ENCODE measurements at regions of chr1 and their contacts with region 1.

Region 1: GRCh38 chr1:28668191-28668955 is at the start of gene GMEB1:
- DNase-seq: peak; percentile 77
- ATAC-seq: peak; percentile 81
- H3K4me3 ChIP-seq: peak within 1 kb of the TSS; percentile 59
- H3K27ac ChIP-seq: peak within 1 kb of the TSS; percentile 93
- H3K4me1 ChIP-seq: peaks cover 2% of the 10 kb centered on the region
- H3K27me3 ChIP-seq: no peaks in the 10 kb centered on the region
- CTCF ChIP-seq: 0 out of 2 replicates have a peak, but pooled peaks have one; percentile 5
- POLR2A ChIP-seq: no peak
- RAD21 ChIP-seq: no peak
- total RNA-seq, gene GMEB1: 7.9 and 8.6 TPM in 2 replicates

Region 2: DNA sequence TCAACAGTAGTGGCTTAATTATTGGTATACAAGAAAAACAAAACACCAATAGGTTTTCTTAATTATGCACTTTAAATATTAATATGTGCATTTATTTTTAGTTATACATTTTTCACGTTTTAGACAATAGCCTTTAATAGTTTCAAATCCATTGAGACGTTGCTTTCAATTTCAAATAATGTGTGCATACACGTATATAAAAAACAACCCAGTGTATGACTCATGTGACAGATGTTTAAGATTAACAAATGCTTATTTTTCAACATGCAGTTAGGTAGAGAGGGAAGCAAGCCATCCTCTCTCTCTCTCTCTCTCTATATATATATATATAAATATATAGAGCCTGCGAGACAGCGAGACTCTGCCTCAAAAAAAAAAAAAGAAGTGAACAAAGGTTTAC is 604.3 kb before region 1 on chr1:
- CTCF ChIA-PET with region 1: no interaction called
- POLR2A ChIA-PET with region 1: no interaction called
- dilution Hi-C with region 1: no loop called
- in situ Hi-C with region 1: no loop called
- intact Hi-C with region 1: no loop called
- DNase-seq: peak; percentile 83
- ATAC-seq: peak; percentile 40; the same call in 1 of the 2 replicates
- H3K4me3 ChIP-seq: no peak overlapping the region
- H3K27ac ChIP-seq: no peak overlapping the region
- H3K4me1 ChIP-seq: peaks cover 3% of the 10 kb centered on the region; the same call in 1 of the 2 replicates
- H3K27me3 ChIP-seq: no peaks in the 10 kb centered on the region
- CTCF ChIP-seq: no peak
- POLR2A ChIP-seq: no peak
- RAD21 ChIP-seq: no peak

Region 3: DNA sequence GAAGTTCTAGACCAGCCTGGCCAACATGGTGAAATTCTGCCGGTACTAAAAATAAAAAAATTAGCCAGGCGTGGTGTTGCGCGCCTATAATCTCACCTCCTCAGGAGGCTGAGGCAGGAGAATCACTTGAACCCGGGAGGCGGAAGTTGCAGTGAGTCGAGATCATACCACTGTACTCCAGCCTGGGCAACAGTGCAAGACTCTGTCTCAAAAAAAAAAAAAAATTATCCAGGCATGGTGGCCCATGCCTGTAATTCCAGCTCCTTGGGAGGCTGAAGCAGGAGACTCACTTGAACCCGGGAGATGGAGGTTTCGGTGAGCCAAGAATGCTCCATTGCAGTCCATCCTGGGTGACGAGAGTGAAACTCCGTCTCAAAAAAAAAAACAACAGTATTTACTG is 94.8 kb before region 1 on chr1:
- CTCF ChIA-PET with region 1: no interaction called
- POLR2A ChIA-PET with region 1: interaction called, 21 read pairs
- dilution Hi-C with region 1: no loop called
- in situ Hi-C with region 1: no loop called
- intact Hi-C with region 1: no loop called
- DNase-seq: no peak
- ATAC-seq: no peak
- H3K4me3 ChIP-seq: no peak overlapping the region
- H3K27ac ChIP-seq: no peak overlapping the region
- H3K4me1 ChIP-seq: no peaks in the 10 kb centered on the region
- H3K27me3 ChIP-seq: no peaks in the 10 kb centered on the region
- CTCF ChIP-seq: no peak
- POLR2A ChIP-seq: no peak
- RAD21 ChIP-seq: no peak

Region 4: GRCh38 chr1:28648474-28649198 is 19.7 kb before region 1 on chr1 and contains the start of gene RNU11:
- CTCF ChIA-PET with region 1: no interaction called
- POLR2A ChIA-PET with region 1: interaction called, 3 read pairs
- dilution Hi-C with region 1: no loop called
- in situ Hi-C with region 1: no loop called
- intact Hi-C with region 1: loop called (anchors 2 kb)
- DNase-seq: peak; percentile 100
- ATAC-seq: peak; percentile 72
- H3K4me3 ChIP-seq: peak within 1 kb of the TSS; percentile 28
- H3K27ac ChIP-seq: peak within 1 kb of the TSS; percentile 79
- H3K4me1 ChIP-seq: peaks cover 1% of the 10 kb centered on the region
- H3K27me3 ChIP-seq: no peaks in the 10 kb centered on the region
- CTCF ChIP-seq: no peak
- POLR2A ChIP-seq: peak; percentile 100
- RAD21 ChIP-seq: peak; percentile 15; the same call in 1 of the 2 replicates
- total RNA-seq, gene RNU11: under 0.01 TPM in 1 of 2 replicates, not detected in the other